ENCODE measurements at regions of chr6 and their contacts with region 1.

Region 1: DNA sequence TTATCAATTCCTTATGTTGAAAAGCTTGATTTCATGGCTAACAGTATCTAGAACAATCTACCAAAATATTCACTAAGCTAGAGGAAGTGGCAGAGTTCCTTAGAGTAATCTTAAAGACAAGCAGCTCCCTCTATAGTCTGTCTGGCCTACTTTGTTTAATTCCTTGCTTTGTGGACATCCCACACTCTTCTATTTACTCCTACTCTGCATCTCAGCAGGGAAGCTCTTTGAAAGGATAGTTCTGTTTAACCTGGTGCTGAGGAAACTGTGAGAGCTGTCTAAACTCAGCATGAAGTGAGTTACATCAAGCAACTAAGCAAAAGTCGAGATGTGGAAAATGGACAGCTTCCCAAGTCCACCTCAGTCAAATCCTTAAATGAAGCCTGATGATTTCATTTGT is 4.3 kb downstream of the REV3L start:
- DNase-seq: no peak
- H3K4me3 ChIP-seq: no peak overlapping the region
- H3K27ac ChIP-seq: no peak overlapping the region
- H3K27me3 ChIP-seq: no peaks in the 10 kb centered on the region
- CTCF ChIP-seq: peak; percentile 56

Region 2: DNA sequence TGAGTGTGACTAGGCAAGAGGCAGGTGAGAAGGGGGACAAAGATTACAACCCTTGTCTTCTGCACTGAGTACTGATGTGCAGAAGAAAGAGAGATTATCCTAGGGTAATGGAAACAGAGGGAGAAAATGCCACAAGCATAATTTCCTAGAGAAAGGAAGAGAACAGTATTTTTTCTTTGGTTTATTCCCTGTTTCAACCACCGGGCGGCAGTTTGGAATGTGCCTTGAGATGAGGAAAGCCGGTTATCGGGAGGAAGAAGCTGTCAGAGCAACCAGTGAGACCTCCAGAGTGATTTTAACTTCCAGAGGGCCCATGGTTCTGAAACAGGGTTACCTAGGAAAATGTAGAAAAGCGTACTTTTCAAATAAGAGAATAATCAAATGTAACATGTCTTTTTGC is 117.1 kb before region 1 on chr6:
- CTCF ChIA-PET with region 1: interaction called, 11 read pairs
- POLR2A ChIA-PET with region 1: no interaction called
- DNase-seq: peak; percentile 15
- H3K4me3 ChIP-seq: no peak overlapping the region
- H3K27ac ChIP-seq: no peak overlapping the region
- H3K27me3 ChIP-seq: no peaks in the 10 kb centered on the region
- CTCF ChIP-seq: peak; percentile 63

Region 3: GRCh38 chr6:111462770-111463391 is 15.9 kb before region 1 on chr6:
- CTCF ChIA-PET with region 1: interaction called, 11 read pairs
- POLR2A ChIA-PET with region 1: no interaction called
- DNase-seq: no peak
- H3K4me3 ChIP-seq: no peak overlapping the region
- H3K27ac ChIP-seq: no peak overlapping the region
- H3K27me3 ChIP-seq: no peaks in the 10 kb centered on the region
- CTCF ChIP-seq: no peak

Measured in AG04450 (cell line).